Activated CD4-positive, alpha-beta T cell treated with anti-CD3 and anti-CD28 coated beads, Interleukin-2, amount 10 ng/mL, durations not matched to agents 24 days and 14 days (primary cell): ENCODE measurements at regions of chr9 and their contacts with region 1.

Region 1: DNA sequence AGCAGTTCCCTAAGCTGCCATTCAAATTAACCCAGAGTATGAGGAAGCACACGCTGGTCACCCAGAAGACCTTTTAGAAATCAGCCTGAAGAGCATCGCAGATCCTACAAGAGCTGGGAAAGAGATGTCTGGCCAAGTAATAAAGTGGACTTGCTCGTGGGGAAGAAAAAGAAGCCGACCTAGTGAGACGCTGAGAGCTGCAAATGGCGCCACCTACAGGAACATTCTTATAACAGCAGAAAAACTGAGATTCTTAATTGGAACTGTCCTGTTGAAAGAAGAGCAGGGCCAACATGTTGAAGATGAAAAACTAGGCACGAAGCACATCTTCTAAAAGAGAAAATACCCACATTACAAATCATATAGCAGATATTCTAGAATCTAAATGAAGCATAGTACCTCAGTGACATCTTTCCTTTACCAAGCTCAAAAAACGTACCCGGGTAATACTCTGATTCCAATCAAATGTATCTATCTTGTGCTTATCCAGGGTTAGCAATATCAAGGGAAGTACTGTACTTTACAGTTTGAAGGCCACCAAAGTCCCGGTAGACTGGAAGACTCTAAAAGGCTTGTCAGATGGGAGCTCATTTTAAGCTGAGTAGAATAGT is 3.9 kb upstream of the GNAQ start:
- DNase-seq: peak; percentile 88
- H3K4me3 Mint-ChIP-seq: no peak overlapping the region
- H3K27ac Mint-ChIP-seq: no peak overlapping the region
- H3K4me1 Mint-ChIP-seq: peaks cover 32% of the 10 kb centered on the region
- H3K27me3 Mint-ChIP-seq: peaks cover 7% of the 10 kb centered on the region

Region 2: GRCh38 chr9:77433675-77434445 is 601.6 kb before region 1 on chr9:
- intact Hi-C with region 1: loop called (anchors 5 kb)
- DNase-seq: peak; percentile 82
- H3K4me3 Mint-ChIP-seq: no peak overlapping the region
- H3K27ac Mint-ChIP-seq: no peak overlapping the region
- H3K4me1 Mint-ChIP-seq: no peaks in the 10 kb centered on the region
- H3K27me3 Mint-ChIP-seq: peaks cover 2% of the 10 kb centered on the region

Region 3: GRCh38 chr9:77751341-77752091 is 284.0 kb before region 1 on chr9:
- intact Hi-C with region 1: loop called (anchors 10 kb)
- DNase-seq: peak; percentile 75
- H3K4me3 Mint-ChIP-seq: no peak overlapping the region
- H3K27ac Mint-ChIP-seq: peak overlapping the region; percentile 59
- H3K4me1 Mint-ChIP-seq: peaks cover 24% of the 10 kb centered on the region
- H3K27me3 Mint-ChIP-seq: no peaks in the 10 kb centered on the region

Region 4: GRCh38 chr9:77899679-77900354 is 135.7 kb before region 1 on chr9:
- intact Hi-C with region 1: loop called (anchors 10 kb)
- DNase-seq: no peak
- H3K4me3 Mint-ChIP-seq: no peak overlapping the region
- H3K27ac Mint-ChIP-seq: no peak overlapping the region
- H3K4me1 Mint-ChIP-seq: peaks cover 25% of the 10 kb centered on the region
- H3K27me3 Mint-ChIP-seq: no peaks in the 10 kb centered on the region

Region 5: GRCh38 chr9:78004478-78005229 is 30.8 kb before region 1 on chr9:
- intact Hi-C with region 1: loop called (anchors 2 kb)
- DNase-seq: no peak
- H3K4me3 Mint-ChIP-seq: no peak overlapping the region
- H3K27ac Mint-ChIP-seq: no peak overlapping the region
- H3K4me1 Mint-ChIP-seq: peaks cover 33% of the 10 kb centered on the region
- H3K27me3 Mint-ChIP-seq: no peaks in the 10 kb centered on the region

Region 6: DNA sequence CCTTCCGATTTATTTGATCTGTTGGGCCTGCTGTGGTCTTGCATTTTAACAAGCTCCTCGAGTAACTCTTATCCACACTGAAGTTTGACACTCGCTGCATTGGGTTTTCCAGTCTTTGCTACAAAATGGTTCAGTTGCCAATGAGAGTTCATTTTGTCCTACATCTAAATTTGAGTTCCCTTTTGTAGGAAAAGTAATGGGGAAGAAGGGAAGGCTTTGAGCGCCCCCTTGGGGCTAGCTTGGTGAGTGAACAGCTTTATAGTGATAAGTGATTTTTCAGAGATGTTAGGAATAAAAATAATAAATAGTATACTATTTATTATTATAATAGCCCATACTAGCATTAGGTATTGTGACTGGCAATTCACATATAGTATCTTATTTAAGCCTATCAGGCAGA is 86.0 kb after region 1 on chr9:
- intact Hi-C with region 1: loop called (anchors 2 kb)
- DNase-seq: peak; percentile 86
- H3K4me3 Mint-ChIP-seq: no peak overlapping the region
- H3K27ac Mint-ChIP-seq: no peak overlapping the region
- H3K4me1 Mint-ChIP-seq: peaks cover 27% of the 10 kb centered on the region
- H3K27me3 Mint-ChIP-seq: peaks cover 16% of the 10 kb centered on the region

Region 7: DNA sequence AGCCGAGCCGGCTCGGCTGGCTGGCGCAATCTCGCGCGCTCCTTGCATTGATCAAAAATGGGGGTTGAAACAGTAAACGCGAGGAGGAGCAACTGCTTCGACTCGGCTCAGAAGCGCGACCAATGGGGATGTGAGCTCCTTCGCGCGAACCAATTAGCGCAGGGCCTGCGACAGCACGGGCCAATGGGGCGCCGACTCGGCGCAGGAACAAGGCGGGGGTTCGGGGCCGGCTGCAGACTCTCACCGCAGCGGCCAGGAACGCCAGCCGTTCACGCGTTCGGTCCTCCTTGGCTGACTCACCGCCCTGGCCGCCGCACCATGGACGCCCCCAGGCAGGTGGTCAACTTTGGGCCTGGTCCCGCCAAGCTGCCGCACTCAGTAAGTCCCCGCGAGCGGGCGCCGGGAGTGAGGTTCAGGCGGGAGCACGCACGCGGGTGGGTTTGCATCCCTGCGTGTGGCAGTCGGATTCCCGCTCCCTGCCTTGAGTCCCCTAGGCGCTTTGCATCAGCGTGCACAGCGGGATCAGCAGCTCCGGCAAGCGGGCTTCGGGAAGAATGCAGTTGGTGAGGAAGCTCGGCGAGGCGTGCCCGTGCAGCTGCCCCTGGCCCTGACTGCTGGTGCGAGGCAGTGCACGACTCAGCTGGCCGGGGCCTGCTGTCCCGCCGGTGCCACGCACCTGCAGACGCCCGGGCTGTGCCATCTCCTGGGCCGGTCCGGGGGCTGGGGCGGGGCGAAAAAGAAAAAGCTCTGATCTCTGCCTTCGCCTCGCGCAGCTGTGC is 261.6 kb after region 1 on chr9 and contains the start of gene PSAT1:
- intact Hi-C with region 1: loop called (anchors 5 kb)
- DNase-seq: peak; percentile 98
- H3K4me3 Mint-ChIP-seq: peak within 1 kb of the TSS; percentile 96
- H3K27ac Mint-ChIP-seq: peak within 1 kb of the TSS; percentile 97
- H3K4me1 Mint-ChIP-seq: peaks cover 36% of the 10 kb centered on the region
- H3K27me3 Mint-ChIP-seq: no peaks in the 10 kb centered on the region
- total RNA-seq, gene PSAT1: 88.5 and 91.3 TPM in 2 replicates